ENCODE measurements at regions of chr6 and their contacts with region 1.

Region 1: DNA sequence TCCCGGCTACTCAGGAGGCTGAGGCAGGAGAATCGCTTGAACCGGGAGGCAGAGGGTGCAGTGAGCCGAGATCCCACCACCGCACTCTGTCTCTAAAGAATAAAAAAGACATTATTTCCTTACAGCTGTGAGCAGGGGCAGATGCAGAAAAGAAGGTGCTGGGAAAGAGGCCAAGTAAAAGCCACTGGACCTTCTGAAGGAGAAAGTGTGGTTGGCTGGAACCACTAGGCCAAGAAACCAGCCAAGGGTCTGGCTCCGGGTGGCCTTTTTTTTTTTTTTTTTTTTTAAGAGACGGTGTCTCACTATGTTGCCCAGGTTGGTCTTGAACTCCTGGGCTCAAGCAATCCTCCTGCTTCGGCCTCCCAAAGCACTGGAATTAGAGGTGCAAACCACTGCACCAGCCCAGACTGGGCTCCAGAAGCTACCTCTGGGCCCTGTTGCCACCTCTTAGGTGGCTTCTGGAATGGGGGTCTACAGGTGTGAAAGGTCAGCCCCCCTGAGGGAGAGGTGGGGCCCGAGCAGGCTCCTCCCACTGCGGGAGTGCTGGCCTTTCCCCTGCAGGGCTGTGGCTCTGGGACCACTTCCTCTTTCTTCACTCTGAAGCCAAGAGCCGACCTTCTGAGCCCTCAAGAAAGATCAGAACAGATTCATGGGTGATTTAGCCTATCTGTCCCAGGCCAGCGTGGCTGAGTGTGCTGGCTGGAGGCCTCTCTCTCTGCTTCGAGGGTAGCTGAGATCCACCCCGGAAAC is at the start of gene FGD2:
- DNase-seq: no peak
- ATAC-seq: peak; percentile 31
- H3K4me3 Mint-ChIP-seq: peak within 1 kb of the TSS; percentile 56
- H3K27ac Mint-ChIP-seq: peak within 1 kb of the TSS; percentile 71
- H3K4me1 Mint-ChIP-seq: peaks cover 32% of the 10 kb centered on the region
- H3K27me3 Mint-ChIP-seq: peaks cover 3% of the 10 kb centered on the region
- total RNA-seq, gene FGD2: 10.1 to 12.1 TPM

Region 2: GRCh38 chr6:36897609-36898008 is 107.6 kb before region 1 on chr6:
- CTCF ChIA-PET with region 1: no interaction called
- POLR2A ChIA-PET with region 1: no interaction called
- DNase-seq: peak; percentile 53
- ATAC-seq: peak; percentile 70
- H3K4me3 Mint-ChIP-seq: no peak overlapping the region
- H3K27ac Mint-ChIP-seq: no peak overlapping the region
- H3K4me1 Mint-ChIP-seq: peaks cover 7% of the 10 kb centered on the region
- H3K27me3 Mint-ChIP-seq: no peaks in the 10 kb centered on the region

Region 3: DNA sequence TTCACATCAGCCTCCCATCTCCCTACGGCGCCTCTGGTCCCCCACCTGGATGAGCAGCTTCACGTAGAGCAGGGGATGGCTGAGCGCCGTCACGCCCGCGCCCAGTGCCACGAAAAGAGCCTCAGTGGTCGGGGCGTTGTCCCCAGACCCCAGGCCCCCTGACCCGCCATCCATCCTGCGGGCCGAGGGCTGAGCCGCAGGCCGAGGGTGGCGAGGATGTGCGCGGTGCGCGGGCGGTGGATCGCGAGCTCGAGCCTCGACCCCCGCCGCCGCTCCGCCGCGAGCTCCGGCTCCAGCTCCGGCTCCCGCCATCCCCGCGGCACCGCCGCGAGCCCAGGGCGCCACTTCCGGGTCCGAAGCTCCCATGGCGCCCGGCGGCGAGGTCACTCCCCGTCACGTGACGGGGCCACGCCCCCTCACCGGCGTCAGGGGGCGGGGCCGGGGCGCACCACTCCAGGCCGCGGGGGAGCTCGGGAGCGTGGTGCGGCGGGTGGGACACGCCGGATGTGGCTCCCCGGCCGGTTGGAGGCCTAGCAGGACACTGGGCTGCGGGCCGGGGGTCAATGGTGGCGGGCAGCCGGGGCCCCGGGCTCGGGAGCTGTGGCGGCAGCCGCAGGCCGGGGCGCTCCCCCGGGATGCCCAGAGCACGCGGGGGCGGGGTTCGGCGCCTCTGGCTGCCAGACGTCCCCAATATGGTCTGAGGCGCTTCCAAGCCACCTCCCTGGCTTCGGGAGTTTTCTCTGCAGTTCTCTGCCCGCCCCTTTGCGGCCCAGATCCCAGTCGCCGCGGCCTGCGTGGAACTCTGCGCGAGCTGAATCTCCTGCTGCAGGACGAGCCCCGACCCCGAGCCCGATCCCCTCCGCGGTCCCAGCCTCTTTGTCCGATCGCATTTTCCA is 19.2 kb before region 1 on chr6 and contains the start of gene MTCH1:
- CTCF ChIA-PET with region 1: interaction called, 3 read pairs
- POLR2A ChIA-PET with region 1: interaction called, 11 read pairs
- DNase-seq: peak; percentile 89
- ATAC-seq: peak; percentile 92
- H3K4me3 Mint-ChIP-seq: peak within 1 kb of the TSS; percentile 98
- H3K27ac Mint-ChIP-seq: peak within 1 kb of the TSS; percentile 96
- H3K4me1 Mint-ChIP-seq: peaks cover 25% of the 10 kb centered on the region
- H3K27me3 Mint-ChIP-seq: peaks cover 12% of the 10 kb centered on the region
- total RNA-seq, gene MTCH1: 117 to 122 TPM

Measured in activated CD8-positive, alpha-beta T cell treated with anti-CD3 and anti-CD28 coated beads, Interleukin-2, amount 10 ng/mL, durations not matched to agents 7 days and 5 days (primary cell).